Activated CD4-positive, alpha-beta T cell treated with anti-CD3 and anti-CD28 coated beads for 36 hours (primary cell): ENCODE measurements at regions of chr6 and their contacts with region 1.

Region 1: DNA sequence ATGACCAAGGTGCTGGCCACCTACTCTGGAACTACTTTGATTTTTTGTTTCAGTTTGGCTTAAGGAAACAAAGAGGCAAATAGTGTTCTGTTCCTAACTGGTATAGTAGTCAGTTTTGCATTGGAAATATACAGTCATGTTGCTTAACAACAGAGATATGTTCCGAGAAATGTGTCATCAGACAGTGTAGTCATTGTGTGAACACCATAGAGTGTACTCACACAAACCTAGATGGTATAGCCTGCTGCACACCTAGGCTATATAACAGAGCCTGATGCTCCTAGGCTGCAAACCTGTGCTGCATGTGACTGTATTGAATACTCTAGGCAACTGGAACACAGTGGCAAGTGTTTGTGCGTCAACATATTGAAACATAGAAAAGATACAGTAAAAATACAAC is 80.4 kb downstream of the ARID1B start:
- DNase-seq: peak; percentile 58
- ATAC-seq: peak; percentile 94
- H3K4me3 Mint-ChIP-seq: peak overlapping the region; percentile 4
- H3K27ac Mint-ChIP-seq: peak overlapping the region; percentile 93
- H3K4me1 Mint-ChIP-seq: peaks cover 85% of the 10 kb centered on the region
- H3K27me3 Mint-ChIP-seq: no peaks in the 10 kb centered on the region

Region 2: GRCh38 chr6:156396068-156396771 is 461.4 kb before region 1 on chr6:
- CTCF ChIA-PET with region 1: no interaction called
- POLR2A ChIA-PET with region 1: no interaction called
- intact Hi-C with region 1: loop called in 1 of 2 experiments (anchors 5 kb)
- DNase-seq: peak; percentile 46
- ATAC-seq: peak; percentile 66
- H3K4me3 Mint-ChIP-seq: peak overlapping the region; percentile 45
- H3K27ac Mint-ChIP-seq: peak overlapping the region; percentile 72
- H3K4me1 Mint-ChIP-seq: peaks cover 77% of the 10 kb centered on the region
- H3K27me3 Mint-ChIP-seq: peaks cover 4% of the 10 kb centered on the region

Region 3: DNA sequence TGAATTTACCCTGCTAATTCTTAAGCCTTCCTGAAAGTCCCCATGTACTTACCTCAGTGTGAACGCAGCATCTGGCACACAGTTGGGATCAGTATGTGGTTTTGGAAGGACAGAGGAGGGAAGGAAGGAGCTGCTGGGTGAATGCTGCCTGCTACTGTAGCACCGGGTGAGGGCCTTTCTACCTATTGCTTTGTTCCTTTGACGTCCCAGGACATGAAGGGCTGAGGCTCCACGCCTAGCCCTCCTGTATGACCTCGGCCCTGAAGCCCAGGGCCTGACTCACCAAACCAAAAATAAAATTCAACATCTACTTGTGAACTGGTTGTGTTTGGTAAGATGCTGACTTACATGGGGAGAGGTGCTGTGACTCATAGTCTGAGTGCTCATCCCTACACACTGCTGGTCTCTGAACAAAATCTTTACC is 29.3 kb before region 1 on chr6:
- CTCF ChIA-PET with region 1: interaction called, 4 read pairs
- POLR2A ChIA-PET with region 1: no interaction called
- intact Hi-C with region 1: loop called in 1 of 2 experiments (anchors 1 kb)
- DNase-seq: peak; percentile 56
- ATAC-seq: peak; percentile 98
- H3K4me3 Mint-ChIP-seq: no peak overlapping the region
- H3K27ac Mint-ChIP-seq: peak overlapping the region; percentile 73
- H3K4me1 Mint-ChIP-seq: peaks cover 75% of the 10 kb centered on the region
- H3K27me3 Mint-ChIP-seq: no peaks in the 10 kb centered on the region

Region 4: GRCh38 chr6:156953479-156954146 is 96.0 kb after region 1 on chr6:
- CTCF ChIA-PET with region 1: interaction called, 3 read pairs
- POLR2A ChIA-PET with region 1: no interaction called
- intact Hi-C with region 1: loop called in 1 of 2 experiments (anchors 1 kb)
- DNase-seq: peak; percentile 48
- ATAC-seq: peak; percentile 44
- H3K4me3 Mint-ChIP-seq: no peak overlapping the region
- H3K27ac Mint-ChIP-seq: peak overlapping the region; percentile 43
- H3K4me1 Mint-ChIP-seq: peaks cover 66% of the 10 kb centered on the region
- H3K27me3 Mint-ChIP-seq: no peaks in the 10 kb centered on the region